Activated CD4-positive, alpha-beta memory T cell treated with anti-CD3 and anti-CD28 coated beads for 36 hours (primary cell): ENCODE measurements at regions of chr11 and their contacts with region 1.

Region 1: DNA sequence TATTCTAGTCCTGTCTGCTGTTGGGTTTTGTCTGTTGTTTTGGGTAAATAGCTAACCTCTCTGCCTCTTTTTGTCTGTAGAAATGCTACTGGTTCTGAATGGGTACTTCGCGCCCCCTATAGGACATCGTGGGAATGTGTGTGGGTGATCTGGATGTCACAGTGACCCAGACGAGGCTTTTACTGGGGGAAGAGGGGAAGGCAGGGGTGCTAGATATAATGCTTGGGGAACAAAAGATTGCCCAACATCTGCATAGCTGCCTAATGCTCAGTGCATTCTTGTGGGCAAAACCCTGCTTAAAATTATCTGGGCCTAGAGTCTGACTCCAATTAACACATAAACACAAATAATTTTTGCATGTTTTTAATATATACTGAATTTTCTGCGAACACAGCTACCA is 57.7 kb downstream of the BMAL1 start:
- DNase-seq: peak; percentile 83
- H3K4me3 Mint-ChIP-seq: no peak overlapping the region
- H3K27ac Mint-ChIP-seq: no peak overlapping the region
- H3K4me1 Mint-ChIP-seq: peaks cover 77% of the 10 kb centered on the region
- H3K27me3 Mint-ChIP-seq: no peaks in the 10 kb centered on the region

Region 2: GRCh38 chr11:13210424-13210823 is 124.9 kb before region 1 on chr11:
- CTCF ChIA-PET with region 1: interaction called, 42 read pairs
- POLR2A ChIA-PET with region 1: no interaction called
- intact Hi-C with region 1: loop called (anchors 1 kb)
- DNase-seq: peak; percentile 46
- H3K4me3 Mint-ChIP-seq: no peak overlapping the region
- H3K27ac Mint-ChIP-seq: no peak overlapping the region
- H3K4me1 Mint-ChIP-seq: peaks cover 40% of the 10 kb centered on the region
- H3K27me3 Mint-ChIP-seq: no peaks in the 10 kb centered on the region

Region 3: DNA sequence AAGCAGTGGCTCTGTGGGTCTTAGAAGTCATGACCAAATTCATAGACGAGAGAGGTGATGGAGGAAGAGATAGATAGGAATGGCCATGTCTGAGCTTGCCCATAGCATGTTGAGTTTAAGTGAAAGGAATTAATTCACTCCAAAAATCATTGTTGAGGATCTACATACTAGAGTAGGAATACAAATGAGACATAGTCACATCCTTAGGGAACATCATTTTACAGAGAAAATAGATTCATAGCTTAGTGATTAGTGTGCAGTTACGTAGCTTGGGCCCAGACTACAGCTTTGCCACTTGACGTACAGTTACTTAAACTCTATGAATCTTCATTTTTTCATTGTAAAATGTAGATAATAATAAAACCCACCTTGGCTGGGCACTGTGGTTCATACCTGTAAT is 79.1 kb before region 1 on chr11:
- CTCF ChIA-PET with region 1: interaction called, 16 read pairs
- POLR2A ChIA-PET with region 1: no interaction called
- intact Hi-C with region 1: no loop called
- DNase-seq: no peak
- H3K4me3 Mint-ChIP-seq: no peak overlapping the region
- H3K27ac Mint-ChIP-seq: no peak overlapping the region
- H3K4me1 Mint-ChIP-seq: peaks cover 20% of the 10 kb centered on the region
- H3K27me3 Mint-ChIP-seq: no peaks in the 10 kb centered on the region

Region 4: GRCh38 chr11:13289081-13289480 is 46.2 kb before region 1 on chr11:
- CTCF ChIA-PET with region 1: interaction called, 31 read pairs
- POLR2A ChIA-PET with region 1: interaction called, 5 read pairs
- intact Hi-C with region 1: loop called (anchors 1 kb)
- DNase-seq: no peak
- H3K4me3 Mint-ChIP-seq: no peak overlapping the region
- H3K27ac Mint-ChIP-seq: no peak overlapping the region
- H3K4me1 Mint-ChIP-seq: peaks cover 81% of the 10 kb centered on the region
- H3K27me3 Mint-ChIP-seq: no peaks in the 10 kb centered on the region

Region 5: DNA sequence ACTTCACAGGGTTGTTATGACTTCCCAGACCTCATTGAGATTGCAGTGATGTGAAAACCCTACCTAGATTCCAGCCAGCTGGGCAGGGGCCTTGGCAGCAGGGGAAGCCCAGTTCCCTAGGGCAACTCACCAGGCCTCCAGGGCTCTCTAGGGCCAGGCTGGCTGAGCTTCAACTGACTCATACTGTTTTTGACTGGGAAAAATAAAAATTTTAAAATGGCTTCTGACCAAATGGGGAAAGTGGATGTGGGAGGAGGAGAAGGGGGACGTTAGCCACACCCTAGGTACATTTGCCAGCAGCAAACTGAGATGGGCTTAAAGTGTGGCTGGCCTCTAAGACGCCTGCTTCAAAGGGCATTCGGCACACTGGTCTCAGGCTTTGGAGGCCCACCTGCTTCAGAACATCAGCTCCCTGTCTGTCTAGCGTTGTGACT is 18.8 kb before region 1 on chr11:
- CTCF ChIA-PET with region 1: interaction called, 15 read pairs
- POLR2A ChIA-PET with region 1: no interaction called
- intact Hi-C with region 1: loop called (anchors 1 kb)
- DNase-seq: no peak
- H3K4me3 Mint-ChIP-seq: no peak overlapping the region
- H3K27ac Mint-ChIP-seq: no peak overlapping the region
- H3K4me1 Mint-ChIP-seq: peaks cover 81% of the 10 kb centered on the region
- H3K27me3 Mint-ChIP-seq: no peaks in the 10 kb centered on the region